GM12878 (cell line): ENCODE measurements at regions of chr1 and their contacts with region 1.

Region 1: GRCh38 chr1:150259758-150260669 is 2.4 kb downstream of the CA14 start:
- DNase-seq: no peak
- ATAC-seq: no peak
- H3K4me3 ChIP-seq: no peak overlapping the region
- H3K27ac ChIP-seq: no peak overlapping the region
- H3K4me1 ChIP-seq: peaks cover 5% of the 10 kb centered on the region; the same call in 1 of the 2 replicates
- H3K27me3 ChIP-seq: no peaks in the 10 kb centered on the region; a peak in 2 of 4 replicates
- CTCF ChIP-seq: no peak
- EP300 ChIP-seq: no peak
- POLR2A ChIP-seq: no peak
- RAD21 ChIP-seq: no peak

Region 2: GRCh38 chr1:150281837-150282653 is 22.0 kb after region 1 on chr1 and contains the start of gene CIART:
- CTCF ChIA-PET with region 1: interaction called, 98 read pairs
- POLR2A ChIA-PET with region 1: interaction called, 3 read pairs
- RAD21 ChIA-PET with region 1: interaction called, 18 read pairs
- SMC1A ChIA-PET with region 1: interaction called, 18 read pairs
- in situ Hi-C with region 1: no loop called
- intact Hi-C with region 1: loop called (anchors 1 kb)
- DNase-seq: no peak
- ATAC-seq: peak; percentile 80
- H3K4me3 ChIP-seq: peak within 1 kb of the TSS; percentile 58
- H3K27ac ChIP-seq: no peak within 1 kb of the TSS
- H3K4me1 ChIP-seq: peaks cover 9% of the 10 kb centered on the region
- H3K27me3 ChIP-seq: no peaks in the 10 kb centered on the region; a peak in 2 of 4 replicates
- CTCF ChIP-seq: no peak
- EP300 ChIP-seq: no peak
- POLR2A ChIP-seq: peak; percentile 45; the same call in 1 of the 2 replicates
- RAD21 ChIP-seq: no peak
- polyA plus RNA-seq, gene CIART: 0.61 to 0.62 TPM

Region 3: DNA sequence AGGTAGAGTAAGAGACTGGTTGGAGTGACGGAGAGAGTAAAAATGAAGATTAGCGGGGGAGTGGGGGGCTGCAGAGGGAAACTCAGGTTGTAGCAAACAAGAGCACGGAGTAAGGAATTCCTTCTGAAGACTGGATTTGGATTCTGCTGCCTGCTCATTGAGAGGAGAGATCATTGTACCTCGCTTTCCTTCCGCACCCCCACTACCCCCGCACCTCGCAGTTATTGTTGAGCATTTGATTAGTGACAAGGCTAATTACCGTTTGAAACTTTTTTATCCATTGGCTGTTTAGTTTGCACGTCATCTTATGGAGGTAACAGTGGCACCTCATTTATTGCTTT is 61.8 kb after region 1 on chr1:
- CTCF ChIA-PET with region 1: interaction called, 12 read pairs
- POLR2A ChIA-PET with region 1: no interaction called
- RAD21 ChIA-PET with region 1: interaction called, 3 read pairs
- SMC1A ChIA-PET with region 1: no interaction called
- in situ Hi-C with region 1: no loop called
- intact Hi-C with region 1: loop called (anchors 5 kb)
- DNase-seq: no peak
- ATAC-seq: peak; percentile 3
- H3K4me3 ChIP-seq: peak overlapping the region; percentile 85
- H3K27ac ChIP-seq: peak overlapping the region; percentile 87
- H3K4me1 ChIP-seq: no peaks in the 10 kb centered on the region
- H3K27me3 ChIP-seq: no peaks in the 10 kb centered on the region
- CTCF ChIP-seq: no peak
- EP300 ChIP-seq: no peak
- POLR2A ChIP-seq: no peak
- RAD21 ChIP-seq: no peak

Region 4: GRCh38 chr1:150456146-150456647 is 196.2 kb after region 1 on chr1:
- CTCF ChIA-PET with region 1: no interaction called
- POLR2A ChIA-PET with region 1: no interaction called
- RAD21 ChIA-PET with region 1: no interaction called
- SMC1A ChIA-PET with region 1: interaction called, 4 read pairs
- in situ Hi-C with region 1: no loop called
- intact Hi-C with region 1: loop called (anchors 10 kb)
- DNase-seq: no peak
- ATAC-seq: no peak
- H3K4me3 ChIP-seq: no peak overlapping the region
- H3K27ac ChIP-seq: no peak overlapping the region
- H3K4me1 ChIP-seq: no peaks in the 10 kb centered on the region
- H3K27me3 ChIP-seq: no peaks in the 10 kb centered on the region
- CTCF ChIP-seq: no peak
- EP300 ChIP-seq: no peak
- POLR2A ChIP-seq: no peak
- RAD21 ChIP-seq: no peak

Region 5: GRCh38 chr1:150529017-150529416 is 269.0 kb after region 1 on chr1:
- CTCF ChIA-PET with region 1: interaction called, 9 read pairs
- POLR2A ChIA-PET with region 1: interaction called, 3 read pairs
- RAD21 ChIA-PET with region 1: no interaction called
- SMC1A ChIA-PET with region 1: interaction called, 9 read pairs
- in situ Hi-C with region 1: no loop called
- intact Hi-C with region 1: loop called (anchors 5 kb)
- DNase-seq: no peak
- ATAC-seq: no peak
- H3K4me3 ChIP-seq: no peak overlapping the region
- H3K27ac ChIP-seq: no peak overlapping the region
- H3K4me1 ChIP-seq: no peaks in the 10 kb centered on the region; the same call in 1 of the 2 replicates
- H3K27me3 ChIP-seq: no peaks in the 10 kb centered on the region
- CTCF ChIP-seq: no peak
- EP300 ChIP-seq: no peak
- POLR2A ChIP-seq: no peak
- RAD21 ChIP-seq: no peak